ENCODE measurements at regions of chr1 and their contacts with region 1.

Region 1: GRCh38 chr1:2415801-2416208 is 3.4 kb upstream of the PEX10 start:
- DNase-seq: no peak
- ATAC-seq: no peak
- H3K4me3 ChIP-seq: no peak overlapping the region
- H3K27ac ChIP-seq: no peak overlapping the region
- H3K4me1 ChIP-seq: peaks cover 32% of the 10 kb centered on the region
- H3K27me3 ChIP-seq: peaks cover 0 to 14% of the 10 kb centered on the region in 2 donors
- CTCF ChIP-seq: no peak
- POLR2A ChIP-seq: no peak

Region 2: DNA sequence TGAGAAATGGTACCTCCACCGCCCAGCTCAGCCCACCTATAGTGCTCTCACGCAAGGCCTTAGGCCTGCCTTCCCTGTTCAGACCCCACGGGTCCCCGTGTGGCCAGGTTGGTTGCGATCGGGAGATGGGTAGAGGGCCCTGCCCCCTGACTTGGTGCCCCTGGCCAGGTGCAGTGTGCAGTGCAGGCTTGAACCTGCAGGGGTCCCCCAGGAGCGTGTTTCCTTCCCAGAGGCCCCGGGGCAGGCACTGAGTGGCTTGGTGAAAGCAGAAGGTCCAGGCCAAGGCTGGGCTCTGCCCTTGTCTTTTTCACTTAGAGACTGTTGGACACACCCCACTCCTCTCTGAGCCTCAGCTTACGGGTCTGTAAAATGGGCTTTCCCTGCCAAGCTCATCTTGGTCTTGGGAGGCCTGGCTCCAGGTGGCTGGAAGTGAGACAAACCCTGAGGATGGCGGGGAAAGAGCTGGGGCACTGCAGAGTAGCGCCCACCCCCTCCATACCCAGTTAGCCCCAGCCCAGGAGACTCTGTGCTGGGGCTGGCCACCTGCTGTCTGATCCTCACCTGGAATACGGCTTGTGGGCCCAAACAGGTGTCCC is 123.6 kb after region 1 on chr1:
- intact Hi-C with region 1: loop called (anchors 5 kb)
- DNase-seq: no peak
- ATAC-seq: no peak
- H3K4me3 ChIP-seq: no peak overlapping the region
- H3K27ac ChIP-seq: no peak overlapping the region
- H3K4me1 ChIP-seq: no peaks in the 10 kb centered on the region
- H3K27me3 ChIP-seq: peaks cover 0 to 4% of the 10 kb centered on the region in 2 donors
- CTCF ChIP-seq: peak in 4 of 7 experiments; percentile 5 to 18 (median 8)
- POLR2A ChIP-seq: no peak

Region 3: GRCh38 chr1:2786329-2787162 is 370.7 kb after region 1 on chr1:
- intact Hi-C with region 1: loop called (anchors 5 kb)
- DNase-seq: peak; percentile 40 to 62 (median 56)
- ATAC-seq: no peak
- H3K4me3 ChIP-seq: no peak overlapping the region
- H3K27ac ChIP-seq: no peak overlapping the region
- H3K4me1 ChIP-seq: no peaks in the 10 kb centered on the region
- H3K27me3 ChIP-seq: peaks cover 0 to 13% of the 10 kb centered on the region in 2 donors
- CTCF ChIP-seq: peak; percentile 47 to 66 (median 54)
- POLR2A ChIP-seq: no peak

Measured in body of pancreas (tissue), 4 donors.